ENCODE measurements at regions of chr11 and their contacts with region 1.

Region 1: GRCh38 chr11:88535916-88536547 is 198.5 kb upstream of the CTSC start:
- DNase-seq: no peak
- ATAC-seq: peak; percentile 96
- H3K4me3 Mint-ChIP-seq: no peak overlapping the region
- H3K27ac Mint-ChIP-seq: no peak overlapping the region
- H3K4me1 Mint-ChIP-seq: peaks cover 4% of the 10 kb centered on the region
- H3K27me3 Mint-ChIP-seq: peaks cover 3% of the 10 kb centered on the region
- CTCF ChIP-seq: no peak

Region 2: DNA sequence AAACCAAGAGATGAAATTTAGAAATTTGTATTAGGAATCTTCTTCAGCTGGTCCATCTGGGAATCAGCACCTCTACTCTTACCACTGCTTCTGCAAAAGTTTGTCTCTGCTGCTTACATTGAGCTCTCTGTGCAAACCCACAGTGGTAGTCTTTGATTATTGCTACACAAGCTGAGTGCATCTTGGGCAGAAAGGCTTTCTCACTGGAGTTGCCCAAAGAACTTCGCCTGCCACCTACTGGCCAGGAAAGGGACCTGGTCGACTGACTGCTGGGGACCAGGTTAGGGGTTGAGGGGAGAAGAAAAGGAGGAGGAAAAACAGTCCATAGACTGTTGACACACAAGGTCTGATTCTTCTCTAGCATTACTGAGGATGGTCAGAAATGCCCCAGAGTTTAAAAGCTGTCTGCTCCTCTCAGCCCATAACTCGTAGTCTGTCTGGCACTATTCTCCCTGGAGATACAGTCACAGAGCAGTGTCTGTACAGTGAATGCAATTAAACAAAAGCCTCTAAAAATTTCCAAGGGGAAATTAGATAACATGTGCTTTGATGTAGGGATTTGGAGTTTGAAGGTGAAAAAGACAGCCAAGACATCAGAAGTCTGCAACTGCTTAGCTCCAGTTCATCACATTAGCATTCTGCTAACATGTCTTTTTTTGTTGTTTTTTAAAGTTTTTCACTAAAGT is 16.5 kb after region 1 on chr11:
- CTCF ChIA-PET with region 1: interaction called, 35 read pairs
- POLR2A ChIA-PET with region 1: no interaction called
- intact Hi-C with region 1: no loop called
- DNase-seq: peak; percentile 72
- ATAC-seq: peak; percentile 86
- H3K4me3 Mint-ChIP-seq: no peak overlapping the region
- H3K27ac Mint-ChIP-seq: no peak overlapping the region
- H3K4me1 Mint-ChIP-seq: peaks cover 5% of the 10 kb centered on the region
- H3K27me3 Mint-ChIP-seq: no peaks in the 10 kb centered on the region
- CTCF ChIP-seq: peak; percentile 65